ENCODE measurements at regions of chr4 and their contacts with region 1.

Region 1: DNA sequence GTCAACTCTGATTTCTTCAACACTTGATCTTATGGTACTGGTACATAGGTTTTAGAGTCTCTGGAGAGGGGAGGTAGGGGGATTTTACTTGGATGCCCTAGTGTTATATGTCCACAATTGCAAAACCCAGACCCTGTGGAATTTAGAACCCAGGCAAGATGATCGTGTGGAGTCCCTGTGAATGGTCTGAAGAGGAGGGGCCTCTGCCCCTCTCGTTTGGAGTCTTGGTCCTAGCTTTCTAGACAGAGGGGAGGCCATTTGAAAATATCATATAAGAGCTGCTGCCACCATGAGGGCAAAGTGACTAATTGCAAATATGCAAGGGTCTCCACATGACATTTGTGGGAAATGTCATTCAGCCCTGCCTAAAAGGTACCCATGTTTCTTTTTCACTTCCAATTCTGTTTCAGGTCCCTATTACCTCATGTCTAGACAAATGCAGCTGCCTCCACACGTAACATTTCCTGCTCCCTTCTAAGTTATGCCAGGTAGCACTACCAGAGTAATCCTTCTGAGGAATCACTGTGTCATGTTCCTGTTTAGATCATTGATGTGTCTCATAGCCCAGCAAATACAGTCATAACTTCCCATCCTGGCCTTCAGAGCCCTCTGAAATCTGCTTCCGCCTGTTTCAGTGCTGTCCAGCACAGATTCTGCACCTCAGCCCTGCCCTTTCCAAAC is 126.8 kb downstream of the KLHL8 start:
- DNase-seq: peak; percentile 38 to 61 (median 46)
- H3K4me3 ChIP-seq: no peak overlapping the region
- H3K4me3 Mint-ChIP-seq: no peak overlapping the region
- H3K27ac ChIP-seq: no peak overlapping the region
- H3K27ac Mint-ChIP-seq: peak overlapping the region; percentile 33 to 91 (median 82)
- H3K4me1 ChIP-seq: peaks cover 20% of the 10 kb centered on the region
- H3K4me1 Mint-ChIP-seq: peaks cover 17 to 29% (median 24%) of the 10 kb centered on the region in 4 donors
- H3K27me3 ChIP-seq: no peaks in the 10 kb centered on the region
- H3K27me3 Mint-ChIP-seq: no peaks in the 10 kb centered on the region

Region 2: DNA sequence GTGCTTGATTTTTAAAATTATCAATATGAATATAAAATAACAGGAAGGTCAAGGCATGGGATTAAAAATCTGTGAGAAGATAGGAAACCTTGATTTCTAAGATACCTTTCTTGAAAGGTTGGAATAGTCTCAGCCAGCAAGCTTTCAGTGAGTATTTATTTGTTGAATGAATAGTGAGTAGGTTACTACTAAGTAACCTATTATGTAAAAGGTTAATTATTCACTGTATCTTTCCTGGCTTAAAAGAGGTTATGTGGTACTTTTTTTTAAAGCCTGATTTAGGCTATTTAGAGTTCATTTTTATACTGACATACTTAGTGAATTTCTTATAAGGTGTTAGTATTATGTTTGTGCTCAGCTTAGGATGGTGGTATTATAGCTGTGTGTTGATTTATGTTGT is 375.9 kb before region 1 on chr4:
- CTCF ChIA-PET with region 1: no interaction called
- POLR2A ChIA-PET with region 1: no interaction called
- intact Hi-C with region 1: no loop called
- DNase-seq: no peak
- H3K4me3 ChIP-seq: no peak overlapping the region
- H3K4me3 Mint-ChIP-seq: no peak overlapping the region
- H3K27ac ChIP-seq: no peak overlapping the region
- H3K27ac Mint-ChIP-seq: no peak overlapping the region
- H3K4me1 ChIP-seq: no peaks in the 10 kb centered on the region
- H3K4me1 Mint-ChIP-seq: no peaks in the 10 kb centered on the region
- H3K27me3 ChIP-seq: no peaks in the 10 kb centered on the region
- H3K27me3 Mint-ChIP-seq: peaks cover 0 to 3% of the 10 kb centered on the region in 2 donors

Region 3: GRCh38 chr4:86927843-86928395 is 165.7 kb before region 1 on chr4:
- CTCF ChIA-PET with region 1: interaction called, 380 read pairs
- POLR2A ChIA-PET with region 1: interaction called, 21 read pairs
- intact Hi-C with region 1: no loop called
- DNase-seq: no peak
- H3K4me3 ChIP-seq: no peak overlapping the region
- H3K4me3 Mint-ChIP-seq: no peak overlapping the region
- H3K27ac ChIP-seq: no peak overlapping the region
- H3K27ac Mint-ChIP-seq: peak overlapping the region in 2 of 7 donors; percentile 10 to 19
- H3K4me1 ChIP-seq: no peaks in the 10 kb centered on the region
- H3K4me1 Mint-ChIP-seq: peaks cover 0 to 2% (median under 1%) of the 10 kb centered on the region in 4 donors
- H3K27me3 ChIP-seq: no peaks in the 10 kb centered on the region
- H3K27me3 Mint-ChIP-seq: no peaks in the 10 kb centered on the region

Region 4: DNA sequence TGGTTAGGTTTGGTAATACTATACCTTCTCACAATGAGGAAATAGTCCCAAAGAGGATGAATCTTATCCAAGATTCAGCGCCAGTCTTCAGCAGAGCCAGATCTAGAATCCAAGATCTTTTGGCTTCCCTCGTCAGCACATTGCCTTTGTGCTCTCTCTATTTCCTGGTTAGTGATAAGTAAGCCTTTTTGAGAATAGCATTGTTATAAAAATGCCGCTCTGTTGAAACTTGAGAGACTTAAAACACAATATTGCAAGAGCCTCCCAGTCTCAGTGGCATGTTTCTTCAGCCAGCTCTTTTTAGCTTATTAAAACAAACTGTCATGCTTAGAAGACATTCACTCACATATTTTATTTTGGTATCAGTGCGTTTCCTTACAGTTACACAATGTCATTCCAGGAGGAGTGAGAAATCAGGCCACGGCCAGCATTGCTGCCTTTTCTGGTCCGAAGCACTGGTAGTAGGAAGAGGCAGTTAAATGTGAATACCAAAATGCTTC is 14.5 kb before region 1 on chr4:
- CTCF ChIA-PET with region 1: interaction called, 21 read pairs
- POLR2A ChIA-PET with region 1: interaction called, 3 read pairs
- intact Hi-C with region 1: no loop called
- DNase-seq: no peak
- H3K4me3 ChIP-seq: no peak overlapping the region
- H3K4me3 Mint-ChIP-seq: no peak overlapping the region
- H3K27ac ChIP-seq: no peak overlapping the region
- H3K27ac Mint-ChIP-seq: no peak overlapping the region
- H3K4me1 ChIP-seq: peaks cover 28% of the 10 kb centered on the region
- H3K4me1 Mint-ChIP-seq: peaks cover 38 to 66% (median 48%) of the 10 kb centered on the region in 4 donors
- H3K27me3 ChIP-seq: no peaks in the 10 kb centered on the region
- H3K27me3 Mint-ChIP-seq: no peaks in the 10 kb centered on the region

Region 5: DNA sequence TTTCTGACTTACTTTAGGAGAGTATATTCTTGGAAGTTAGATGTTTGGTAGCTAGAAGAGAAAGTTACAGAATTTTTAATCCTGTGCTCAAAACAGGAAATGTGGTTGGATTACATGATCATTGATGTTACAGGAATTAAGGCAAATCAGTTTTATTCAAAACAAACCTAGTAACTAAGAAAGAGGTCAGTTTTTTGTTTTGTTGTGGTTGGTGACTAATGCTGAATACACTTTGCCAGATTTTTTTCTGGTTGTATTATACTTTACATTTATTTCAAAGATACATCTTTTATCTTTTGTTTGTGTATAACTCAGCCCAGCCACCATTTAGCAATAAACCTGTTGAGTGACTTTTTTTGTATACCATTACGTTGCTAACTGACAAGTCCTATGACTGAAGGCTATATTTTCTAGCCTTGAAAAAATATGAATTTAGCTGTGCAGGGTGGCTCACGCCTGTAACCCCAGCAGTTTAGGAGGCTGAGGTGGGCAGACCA is 10.2 kb after region 1 on chr4:
- CTCF ChIA-PET with region 1: interaction called, 31 read pairs
- POLR2A ChIA-PET with region 1: interaction called, 11 read pairs
- intact Hi-C with region 1: no loop called
- DNase-seq: peak; percentile 51 to 84 (median 80)
- H3K4me3 ChIP-seq: no peak overlapping the region
- H3K4me3 Mint-ChIP-seq: peak overlapping the region; percentile 30 to 82 (median 75)
- H3K27ac ChIP-seq: peak overlapping the region; percentile 51
- H3K27ac Mint-ChIP-seq: peak overlapping the region; percentile 91 to 97 (median 96)
- H3K4me1 ChIP-seq: peaks cover 48% of the 10 kb centered on the region
- H3K4me1 Mint-ChIP-seq: peaks cover 51 to 67% (median 56%) of the 10 kb centered on the region in 4 donors
- H3K27me3 ChIP-seq: no peaks in the 10 kb centered on the region
- H3K27me3 Mint-ChIP-seq: no peaks in the 10 kb centered on the region

Region 6: DNA sequence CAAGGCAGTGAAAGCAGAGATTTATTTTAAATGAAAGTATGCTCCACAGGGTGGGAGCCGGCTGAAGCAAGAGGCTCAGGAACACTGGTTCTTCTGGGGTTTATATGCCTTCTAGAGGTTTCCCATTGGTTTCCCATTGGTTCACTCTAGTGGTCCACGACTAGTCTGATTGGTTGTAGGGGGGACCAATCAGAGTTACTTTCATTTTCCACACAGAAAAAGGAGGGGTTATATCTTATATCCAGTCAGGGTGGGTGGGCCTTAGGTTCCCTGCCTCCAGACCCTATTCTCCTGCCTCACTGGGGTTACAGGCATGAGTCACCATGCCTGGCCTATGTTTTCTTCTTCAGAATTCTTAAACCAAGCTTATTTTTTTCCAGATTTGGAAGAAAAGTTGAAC is 25.2 kb after region 1 on chr4:
- CTCF ChIA-PET with region 1: interaction called, 17 read pairs
- POLR2A ChIA-PET with region 1: no interaction called
- intact Hi-C with region 1: no loop called
- DNase-seq: no peak
- H3K4me3 ChIP-seq: no peak overlapping the region
- H3K4me3 Mint-ChIP-seq: no peak overlapping the region
- H3K27ac ChIP-seq: no peak overlapping the region
- H3K27ac Mint-ChIP-seq: peak overlapping the region in 5 of 7 donors; percentile 17 to 41 (median 24)
- H3K4me1 ChIP-seq: peaks cover 15% of the 10 kb centered on the region
- H3K4me1 Mint-ChIP-seq: peaks cover 16 to 46% (median 23%) of the 10 kb centered on the region in 4 donors
- H3K27me3 ChIP-seq: no peaks in the 10 kb centered on the region
- H3K27me3 Mint-ChIP-seq: no peaks in the 10 kb centered on the region

Measured in CD4-positive, alpha-beta memory T cell (primary cell).